ENCODE measurements at regions of chr20 and their contacts with region 1.

Region 1: DNA sequence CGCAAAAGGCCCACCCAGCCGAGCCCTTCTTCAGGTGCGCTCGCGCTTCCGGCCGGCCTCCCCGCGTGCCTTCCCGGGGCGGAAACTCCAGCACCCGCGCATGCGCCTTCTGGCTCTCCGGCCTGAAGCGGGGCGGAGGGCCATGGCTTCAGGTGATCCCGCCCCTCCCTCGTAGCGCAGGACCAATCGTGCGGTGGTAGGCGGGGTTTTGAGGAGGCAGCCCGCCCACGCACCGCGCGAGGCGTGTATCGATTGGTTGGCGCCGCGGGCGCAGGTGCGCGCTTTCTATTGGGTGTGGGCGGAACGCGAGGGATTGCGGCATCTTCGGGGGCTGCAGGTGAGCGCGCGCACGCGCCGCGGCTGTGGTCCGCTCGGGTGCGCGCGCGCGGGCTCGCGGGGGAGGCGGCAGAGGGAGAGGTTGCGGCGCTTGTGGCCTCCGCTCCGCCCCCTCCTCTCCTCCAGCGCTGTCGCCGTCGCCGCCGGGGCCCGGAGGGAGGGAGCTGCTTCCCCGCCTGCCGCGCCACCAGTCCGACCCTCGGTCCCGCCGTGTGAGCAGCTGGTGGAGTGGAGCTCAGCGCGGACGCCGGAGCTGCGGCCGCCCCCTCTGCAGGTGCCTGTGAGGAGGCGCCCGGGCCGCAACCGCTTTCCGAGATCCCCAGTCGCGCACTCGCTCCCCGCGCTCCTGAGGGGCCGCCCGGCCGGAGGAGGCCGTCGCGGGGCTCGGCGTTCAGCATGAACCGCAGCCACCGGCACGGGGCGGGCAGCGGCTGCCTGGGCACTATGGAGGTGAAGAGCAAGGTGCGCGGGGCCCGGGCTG is at the start of gene PARD6B:
- DNase-seq: peak; percentile 98 to 100 (median 99)
- ATAC-seq: peak; percentile 94
- H3K4me3 ChIP-seq: peak within 1 kb of the TSS; percentile 68
- H3K4me3 Mint-ChIP-seq: peak within 1 kb of the TSS; percentile 93
- H3K27ac ChIP-seq: peak within 1 kb of the TSS; percentile 44 to 52
- H3K27ac Mint-ChIP-seq: peak within 1 kb of the TSS; percentile 88
- H3K4me1 ChIP-seq: peaks cover 16% of the 10 kb centered on the region
- H3K4me1 Mint-ChIP-seq: peaks cover 41% of the 10 kb centered on the region
- H3K27me3 ChIP-seq: no peaks in the 10 kb centered on the region
- H3K27me3 Mint-ChIP-seq: no peaks in the 10 kb centered on the region
- CTCF ChIP-seq: no peak
- total RNA-seq, gene PARD6B: 5.6 to 8.2 TPM

Region 2: DNA sequence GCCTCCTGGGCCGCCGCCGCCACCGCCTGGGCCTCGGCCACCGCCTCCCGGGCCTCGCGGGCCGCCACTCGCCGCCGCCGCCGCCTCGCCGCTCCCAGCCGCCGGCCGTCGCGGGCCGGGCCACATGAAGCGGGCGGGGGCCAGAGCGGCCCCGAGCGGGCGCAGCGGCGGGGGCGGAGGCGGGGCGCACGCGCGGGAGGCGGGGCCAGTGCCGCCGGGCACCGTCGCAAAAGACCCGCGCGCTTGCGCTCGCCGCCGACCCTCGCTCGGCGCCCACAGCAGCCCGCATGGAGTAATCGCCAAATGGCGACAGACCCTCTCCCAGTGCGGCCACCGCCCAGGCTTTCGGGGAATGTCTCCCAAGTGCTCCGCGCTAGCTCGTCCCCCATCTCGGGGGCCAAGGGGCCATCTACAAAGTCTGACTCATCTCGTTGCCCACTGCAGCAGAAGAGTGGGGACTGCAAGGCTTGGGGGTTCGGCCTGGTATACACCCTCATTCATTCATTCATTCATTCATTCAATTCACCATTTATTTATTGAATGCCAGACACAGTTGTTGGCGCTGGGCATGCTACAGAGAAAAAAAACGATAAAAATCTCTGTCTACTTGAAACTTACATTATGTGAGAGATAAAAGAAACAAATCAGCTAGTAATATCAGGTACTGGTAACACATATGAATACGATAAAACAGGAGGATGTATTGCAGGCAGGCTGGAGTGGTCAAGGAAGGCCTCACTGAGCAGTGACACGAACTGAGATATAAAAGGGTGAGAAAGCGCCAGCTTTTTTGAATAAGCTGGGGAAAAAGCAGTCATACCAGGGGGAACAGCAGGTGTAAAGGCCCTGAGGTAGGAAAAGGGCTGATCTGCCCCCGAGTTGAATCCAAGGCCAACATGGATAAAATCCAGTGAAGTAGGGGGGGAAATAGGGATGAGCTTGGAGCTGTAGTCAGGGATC is 1017.2 kb before region 1 on chr20 and contains the start of gene B4GALT5:
- CTCF ChIA-PET with region 1: no interaction called
- POLR2A ChIA-PET with region 1: no interaction called
- intact Hi-C with region 1: loop called in 1 of 2 experiments (anchors 5 kb)
- DNase-seq: peak; percentile 17 to 84 (median 50)
- ATAC-seq: peak; percentile 79
- H3K4me3 ChIP-seq: peak within 1 kb of the TSS; percentile 89
- H3K4me3 Mint-ChIP-seq: peak within 1 kb of the TSS; percentile 93
- H3K27ac ChIP-seq: peak within 1 kb of the TSS in 1 of 2 donors; percentile 40
- H3K27ac Mint-ChIP-seq: peak within 1 kb of the TSS; percentile 63
- H3K4me1 ChIP-seq: peaks cover 17% of the 10 kb centered on the region
- H3K4me1 Mint-ChIP-seq: peaks cover 35% of the 10 kb centered on the region
- H3K27me3 ChIP-seq: no peaks in the 10 kb centered on the region
- H3K27me3 Mint-ChIP-seq: no peaks in the 10 kb centered on the region
- CTCF ChIP-seq: no peak
- total RNA-seq, gene B4GALT5: 3.1 to 3.2 TPM

Region 3: GRCh38 chr20:49982346-49983122 is 748.7 kb before region 1 on chr20 and contains the start of gene SNAI1:
- CTCF ChIA-PET with region 1: no interaction called
- POLR2A ChIA-PET with region 1: no interaction called
- intact Hi-C with region 1: loop called in 1 of 2 experiments (anchors 5 kb)
- DNase-seq: peak; percentile 68 to 94 (median 82)
- ATAC-seq: peak; percentile 91
- H3K4me3 ChIP-seq: peak within 1 kb of the TSS; percentile 48
- H3K4me3 Mint-ChIP-seq: peak within 1 kb of the TSS; percentile 72
- H3K27ac ChIP-seq: no peak within 1 kb of the TSS
- H3K27ac Mint-ChIP-seq: peak within 1 kb of the TSS; percentile 74
- H3K4me1 ChIP-seq: peaks cover 24% of the 10 kb centered on the region
- H3K4me1 Mint-ChIP-seq: peaks cover 15% of the 10 kb centered on the region
- H3K27me3 ChIP-seq: no peaks in the 10 kb centered on the region
- H3K27me3 Mint-ChIP-seq: no peaks in the 10 kb centered on the region
- CTCF ChIP-seq: peak; percentile 28
- total RNA-seq, gene SNAI1: 1.7 to 2.5 TPM

Region 4: DNA sequence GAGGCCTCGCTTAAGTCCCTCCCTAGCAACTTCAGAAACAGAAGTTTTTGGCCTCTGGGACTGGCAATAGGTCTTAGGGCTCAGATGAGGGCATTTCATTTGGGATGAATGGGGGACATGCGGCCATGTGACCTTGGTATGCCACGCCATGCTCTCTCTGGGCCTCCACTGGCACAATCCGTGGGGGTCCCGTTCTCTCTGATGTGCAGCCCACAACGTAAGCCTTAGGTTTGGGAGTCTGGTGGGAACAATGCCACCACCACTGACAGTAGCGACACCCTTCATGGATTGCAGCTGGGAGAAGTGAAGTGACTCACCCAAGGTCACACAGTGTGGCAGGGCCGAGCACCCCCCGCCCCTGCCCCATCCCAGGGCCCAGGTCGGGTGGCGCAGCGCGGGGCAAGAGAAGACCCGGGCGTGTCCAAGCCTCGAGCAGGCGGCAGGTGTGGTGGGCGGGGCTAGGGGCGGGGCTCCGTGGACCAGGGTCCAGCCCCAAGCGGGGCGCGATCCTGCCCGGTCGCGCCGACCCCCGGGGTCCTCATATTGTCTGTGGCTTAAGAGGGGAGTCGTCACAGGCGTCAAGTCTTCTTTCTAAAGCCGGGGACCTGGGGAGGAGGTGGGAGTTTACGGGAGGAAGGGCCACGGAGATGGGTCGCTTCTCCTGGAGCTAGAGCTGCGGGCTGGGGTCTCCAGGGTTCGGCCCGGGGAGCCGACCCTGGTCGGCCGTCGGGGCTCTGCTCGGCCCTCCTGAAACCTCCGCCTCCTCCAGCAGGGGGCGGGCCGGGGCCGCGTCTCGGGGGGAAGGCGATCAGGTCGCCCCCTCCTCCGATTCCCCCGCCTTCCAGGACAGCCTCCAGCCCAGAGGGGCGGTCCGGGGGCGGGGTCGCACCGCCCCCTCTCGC is 541.3 kb before region 1 on chr20:
- CTCF ChIA-PET with region 1: no interaction called
- POLR2A ChIA-PET with region 1: no interaction called
- intact Hi-C with region 1: loop called in 1 of 2 experiments (anchors 5 kb)
- DNase-seq: peak; percentile 73 to 91 (median 80)
- ATAC-seq: peak; percentile 54
- H3K4me3 ChIP-seq: peak overlapping the region; percentile 75
- H3K4me3 Mint-ChIP-seq: peak overlapping the region; percentile 76
- H3K27ac ChIP-seq: no peak overlapping the region
- H3K27ac Mint-ChIP-seq: peak overlapping the region; percentile 42
- H3K4me1 ChIP-seq: peaks cover 38% of the 10 kb centered on the region
- H3K4me1 Mint-ChIP-seq: peaks cover 21% of the 10 kb centered on the region
- H3K27me3 ChIP-seq: peaks cover 0 to 5% of the 10 kb centered on the region in 2 experiments
- H3K27me3 Mint-ChIP-seq: peaks cover 10% of the 10 kb centered on the region
- CTCF ChIP-seq: peak; percentile 61

Region 5: DNA sequence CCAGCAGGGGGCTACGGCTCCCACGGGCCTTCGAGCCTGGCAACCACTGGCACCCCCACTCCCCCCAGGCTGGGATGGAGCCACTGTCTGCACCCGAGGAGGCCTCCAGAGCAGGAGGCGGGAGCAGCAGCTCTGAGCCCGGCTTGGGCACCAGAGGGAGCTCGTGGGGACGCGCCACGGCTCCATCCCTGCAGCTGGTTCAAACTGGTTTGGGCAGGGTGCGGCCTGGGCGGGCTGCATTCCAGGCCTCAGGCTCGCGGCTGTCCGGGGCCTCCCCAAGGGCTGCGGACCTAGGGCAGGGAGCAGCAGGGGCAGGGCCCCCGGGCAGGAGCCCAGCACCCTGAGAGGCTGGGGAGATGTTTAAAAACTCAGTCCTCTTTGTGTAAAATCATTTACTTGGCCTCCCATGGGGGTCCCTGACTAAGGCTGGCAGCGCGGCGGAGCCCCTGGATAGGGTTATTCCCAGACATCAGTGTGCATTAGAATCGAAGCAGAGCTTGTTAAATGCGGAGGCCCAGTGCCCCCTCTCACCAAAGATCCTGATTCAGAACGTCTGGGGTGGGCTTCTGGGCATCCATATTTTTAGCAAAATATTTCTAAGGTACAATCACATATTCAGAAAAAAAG is 59.5 kb after region 1 on chr20:
- CTCF ChIA-PET with region 1: interaction called, 6 read pairs
- POLR2A ChIA-PET with region 1: interaction called, 4 read pairs
- intact Hi-C with region 1: loop called in 1 of 2 experiments (anchors 5 kb)
- DNase-seq: peak; percentile 63 to 87 (median 78)
- ATAC-seq: peak; percentile 68
- H3K4me3 ChIP-seq: peak overlapping the region; percentile 25
- H3K4me3 Mint-ChIP-seq: no peak overlapping the region
- H3K27ac ChIP-seq: peak overlapping the region in 1 of 2 donors; percentile 71
- H3K27ac Mint-ChIP-seq: peak overlapping the region; percentile 44
- H3K4me1 ChIP-seq: peaks cover 27% of the 10 kb centered on the region
- H3K4me1 Mint-ChIP-seq: peaks cover 10% of the 10 kb centered on the region
- H3K27me3 ChIP-seq: no peaks in the 10 kb centered on the region
- H3K27me3 Mint-ChIP-seq: no peaks in the 10 kb centered on the region
- CTCF ChIP-seq: peak; percentile 81

Region 6: GRCh38 chr20:50958615-50959542 is 227.6 kb after region 1 on chr20 and contains the start of gene MOCS3:
- CTCF ChIA-PET with region 1: no interaction called
- POLR2A ChIA-PET with region 1: interaction called, 3 read pairs
- intact Hi-C with region 1: loop called in 1 of 2 experiments (anchors 5 kb)
- DNase-seq: peak; percentile 70 to 96 (median 76)
- ATAC-seq: peak; percentile 81
- H3K4me3 ChIP-seq: peak within 1 kb of the TSS; percentile 94
- H3K4me3 Mint-ChIP-seq: peak within 1 kb of the TSS; percentile 94
- H3K27ac ChIP-seq: peak within 1 kb of the TSS; percentile 82 to 99
- H3K27ac Mint-ChIP-seq: peak within 1 kb of the TSS; percentile 96
- H3K4me1 ChIP-seq: peaks cover 34% of the 10 kb centered on the region
- H3K4me1 Mint-ChIP-seq: peaks cover 62% of the 10 kb centered on the region
- H3K27me3 ChIP-seq: no peaks in the 10 kb centered on the region
- H3K27me3 Mint-ChIP-seq: no peaks in the 10 kb centered on the region
- CTCF ChIP-seq: no peak
- total RNA-seq, gene MOCS3: 2.7 to 3.0 TPM